ENCODE measurements at regions of chr4 and their contacts with region 1.

Region 1: DNA sequence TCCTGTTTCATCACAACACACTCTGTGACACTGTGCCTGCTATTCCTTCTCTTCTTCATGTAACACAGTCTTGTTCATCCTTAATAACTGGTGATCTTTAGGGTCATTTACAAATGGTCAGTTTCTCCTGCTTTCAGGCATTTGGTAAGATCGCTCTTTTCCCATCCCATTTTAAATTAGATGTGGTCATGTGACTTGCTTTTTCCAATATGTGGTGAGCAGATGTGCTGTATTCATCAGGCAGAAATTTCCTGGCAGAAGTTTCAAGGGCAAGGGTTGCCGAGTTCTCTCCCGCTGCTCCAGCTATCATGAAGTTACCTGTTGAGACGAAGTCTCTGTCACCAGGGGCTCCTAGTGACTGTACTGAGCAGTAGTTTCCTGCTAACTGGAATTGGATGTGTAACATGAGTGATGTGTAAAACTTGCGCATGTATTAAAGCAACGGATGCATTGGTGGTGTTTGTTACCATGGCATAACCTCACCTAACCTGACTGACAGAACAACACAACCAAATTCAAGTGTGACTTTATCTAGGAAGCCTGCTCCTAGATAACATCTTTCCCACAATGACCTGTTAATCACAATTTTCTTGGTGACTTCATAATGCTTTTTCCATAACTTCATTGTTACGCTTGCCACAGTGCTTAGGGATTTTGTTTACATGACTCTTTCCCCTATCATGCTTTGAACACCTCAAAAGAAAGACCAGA is 29.5 kb upstream of the BMPR1B start:
- DNase-seq: no peak
- ATAC-seq: no peak

Region 2: GRCh38 chr4:94304365-94304971 is 423.7 kb before region 1 on chr4:
- intact Hi-C with region 1: loop called (anchors 2 kb)
- DNase-seq: no peak
- ATAC-seq: no peak

Region 3: GRCh38 chr4:94332983-94333590 is 395.1 kb before region 1 on chr4:
- intact Hi-C with region 1: loop called (anchors 5 kb)
- DNase-seq: no peak
- ATAC-seq: peak; percentile 52

Region 4: DNA sequence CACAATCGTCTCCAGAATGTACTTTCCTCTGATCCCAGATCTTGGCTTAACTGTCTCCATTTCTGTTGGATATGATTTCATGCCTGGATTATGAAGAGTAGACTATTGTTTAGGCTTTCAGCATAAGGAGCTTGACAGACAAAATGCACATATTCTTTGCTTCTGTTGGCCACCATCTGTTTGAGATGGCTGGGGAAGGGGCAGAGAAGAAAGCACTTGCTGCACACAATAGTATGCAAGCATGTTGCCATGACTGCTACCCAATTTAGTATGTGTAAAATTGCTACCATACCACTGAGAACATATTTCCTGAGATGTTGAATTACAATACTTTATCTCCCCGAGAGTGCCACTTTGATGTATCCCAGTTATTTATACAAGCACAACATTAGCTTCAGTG is 98.4 kb before region 1 on chr4:
- intact Hi-C with region 1: no loop called
- DNase-seq: no peak
- ATAC-seq: no peak